Heart left ventricle (tissue), 16 donors: ENCODE measurements at regions of chrX and their contacts with region 1.

Region 1: DNA sequence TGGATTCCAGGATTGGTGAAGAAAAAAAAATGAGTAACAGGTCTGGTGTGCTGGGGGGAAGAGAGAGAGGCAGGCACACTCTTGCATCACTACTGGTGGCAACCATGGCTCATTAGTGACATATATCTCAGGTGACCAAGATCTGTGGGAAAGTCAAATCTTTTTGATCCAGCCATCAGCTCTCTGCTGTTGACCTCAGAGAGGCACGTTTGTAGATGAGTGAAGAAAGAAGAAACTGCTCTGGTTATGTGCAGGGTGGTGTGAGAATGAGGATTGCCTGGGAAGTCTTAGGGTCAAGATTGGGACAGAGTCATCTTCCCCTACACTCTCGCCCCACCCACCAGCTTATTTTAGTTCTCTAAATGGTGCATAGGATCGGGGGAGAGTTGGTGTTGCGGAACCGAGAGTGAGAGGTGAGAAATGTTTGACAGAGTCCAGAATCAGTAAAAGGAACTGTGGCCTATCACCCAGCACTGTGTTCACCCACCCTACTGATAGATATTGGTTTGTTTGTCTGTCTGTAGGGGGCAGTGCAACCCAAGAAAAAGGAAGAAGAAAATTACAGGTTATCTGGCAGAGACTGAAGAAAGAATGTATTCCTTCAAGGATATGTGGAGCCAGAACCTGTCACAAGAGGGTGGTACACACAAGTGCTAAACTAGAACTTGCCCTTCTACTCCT is 21.9 kb downstream of the ARMCX6 start:
- DNase-seq: peak in 2 of 5 donors; percentile 18 to 21
- ATAC-seq: peak in 3 of 4 donors; percentile 56 to 84 (median 60)
- H3K4me3 ChIP-seq: no peak overlapping the region
- H3K27ac ChIP-seq: no peak overlapping the region
- H3K4me1 ChIP-seq: no peaks in the 10 kb centered on the region
- H3K27me3 ChIP-seq: peaks cover 0 to 31% (median 0%) of the 10 kb centered on the region in 9 donors
- CTCF ChIP-seq: peak; percentile 36 to 66 (median 54)
- POLR2A ChIP-seq: no peak

Region 2: GRCh38 chrX:101415180-101416145 is 180.4 kb before region 1 on chrX:
- intact Hi-C with region 1: loop called in 1 of 10 experiments (anchors 10 kb)
- DNase-seq: peak in 2 of 5 donors; percentile 16 to 19
- ATAC-seq: peak in 3 of 4 donors; percentile 29 to 34 (median 34)
- H3K4me3 ChIP-seq: no peak overlapping the region
- H3K27ac ChIP-seq: peak overlapping the region in 10 of 12 donors; percentile 17 to 77 (median 60)
- H3K4me1 ChIP-seq: peaks cover 0 to 43% (median 12%) of the 10 kb centered on the region in 12 donors
- H3K27me3 ChIP-seq: peaks cover 0 to 29% (median 0%) of the 10 kb centered on the region in 9 donors
- CTCF ChIP-seq: peak; percentile 49 to 85 (median 69)
- POLR2A ChIP-seq: no peak

Region 3: GRCh38 chrX:101764538-101764937 is 168.7 kb after region 1 on chrX:
- intact Hi-C with region 1: loop called in 1 of 10 experiments (anchors 10 kb)
- DNase-seq: no peak
- ATAC-seq: no peak
- H3K4me3 ChIP-seq: no peak overlapping the region
- H3K27ac ChIP-seq: no peak overlapping the region
- H3K4me1 ChIP-seq: no peaks in the 10 kb centered on the region
- H3K27me3 ChIP-seq: peaks cover 0 to 22% (median 0%) of the 10 kb centered on the region in 9 donors
- CTCF ChIP-seq: no peak
- POLR2A ChIP-seq: no peak